Esophagus squamous epithelium (tissue), 5 donors: ENCODE measurements at regions of chr14 and their contacts with region 1.

Region 1: DNA sequence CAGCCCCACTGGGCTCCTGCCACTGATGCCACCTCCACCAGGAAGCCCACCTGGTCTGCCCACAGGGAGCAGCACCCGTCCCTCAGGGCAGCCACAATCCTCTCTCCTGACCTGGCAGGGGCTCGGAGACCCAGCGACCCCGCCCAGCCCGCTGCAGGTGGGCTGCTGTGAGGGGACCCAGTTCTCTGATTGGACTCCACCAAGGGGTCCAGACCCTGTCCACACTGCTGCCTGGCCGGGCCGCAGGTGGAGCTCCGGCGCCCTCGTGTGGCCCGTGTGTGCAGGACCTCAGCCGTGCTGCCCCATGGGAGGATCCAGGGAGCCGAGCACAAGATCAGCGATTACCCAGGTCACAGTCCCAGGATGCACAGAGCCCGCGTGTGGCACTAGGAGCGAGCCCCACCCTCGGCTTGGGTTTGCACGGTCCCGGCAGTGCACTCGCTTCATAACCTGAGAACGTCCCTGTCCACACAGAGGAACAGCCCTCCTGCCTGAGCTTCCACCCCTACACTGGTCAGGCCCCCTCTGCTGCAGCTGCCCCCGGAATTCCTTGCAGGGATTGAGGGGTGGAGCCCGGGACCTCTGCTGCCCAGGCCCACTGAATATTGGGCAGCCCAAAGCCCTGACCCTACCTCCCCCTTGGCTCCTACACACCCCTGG is 35.4 kb upstream of the TMEM179 start:
- DNase-seq: no peak
- H3K4me3 ChIP-seq: no peak overlapping the region
- H3K27ac ChIP-seq: no peak overlapping the region
- H3K4me1 ChIP-seq: peaks cover 0 to 7% (median 0%) of the 10 kb centered on the region in 3 donors
- H3K27me3 ChIP-seq: peaks cover 0 to 86% (median 4%) of the 10 kb centered on the region in 4 donors
- CTCF ChIP-seq: peak; percentile 62 to 88 (median 78)
- POLR2A ChIP-seq: no peak

Region 2: DNA sequence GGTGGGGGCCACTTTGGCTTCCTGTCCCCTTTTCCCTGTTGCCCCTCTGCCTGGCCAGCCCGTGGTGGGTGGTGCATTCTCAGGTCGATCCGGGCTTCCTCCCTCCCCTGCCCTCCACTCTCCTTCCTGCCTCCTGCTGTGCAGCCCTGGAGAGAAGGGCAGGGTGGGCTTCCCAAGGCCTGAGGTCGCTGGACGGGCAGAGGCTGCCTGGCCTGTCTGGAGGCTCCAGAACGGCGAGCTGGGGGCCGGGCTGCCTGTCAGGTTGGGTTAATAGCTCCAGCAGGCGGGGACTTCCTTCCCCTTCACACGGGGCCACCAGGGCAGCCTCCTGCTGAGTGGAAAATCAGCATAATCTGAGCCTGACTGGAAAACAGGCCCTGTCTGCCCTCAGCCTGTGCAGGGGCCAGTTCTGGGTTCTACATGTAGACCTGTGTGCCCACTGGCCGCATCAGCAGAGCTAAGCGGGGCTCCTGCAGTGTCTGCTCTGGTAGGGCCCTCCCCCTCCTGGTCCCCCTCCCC is 490.3 kb before region 1 on chr14:
- intact Hi-C with region 1: loop called (anchors 10 kb)
- DNase-seq: no peak
- H3K4me3 ChIP-seq: no peak overlapping the region
- H3K27ac ChIP-seq: peak overlapping the region in 2 of 4 donors; percentile 33 to 44
- H3K4me1 ChIP-seq: peaks cover 4 to 47% (median 14%) of the 10 kb centered on the region in 3 donors
- H3K27me3 ChIP-seq: peaks cover 0 to 15% (median 0%) of the 10 kb centered on the region in 4 donors
- CTCF ChIP-seq: no peak
- POLR2A ChIP-seq: no peak